ENCODE measurements at regions of chr11 and their contacts with region 1.

Region 1: DNA sequence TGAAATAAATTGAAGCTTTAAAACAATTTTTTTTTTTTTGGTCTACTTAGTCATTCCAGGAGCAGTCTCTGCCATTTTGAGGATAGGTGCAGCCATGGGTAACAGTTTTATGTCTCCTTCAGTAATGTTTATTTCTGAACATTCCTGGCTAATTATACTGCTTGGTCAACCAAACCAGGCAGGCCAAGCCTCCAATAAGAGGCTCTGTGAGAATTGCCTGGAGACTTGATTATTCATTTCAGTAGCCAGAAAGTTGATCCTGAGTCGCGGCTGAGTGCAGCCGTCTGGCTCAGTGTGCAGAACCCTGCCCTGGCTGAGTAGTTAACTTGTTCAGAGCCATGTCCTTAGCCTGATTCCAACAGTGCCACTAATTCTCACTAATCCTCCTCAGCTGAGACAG is 364.0 kb upstream of the FAT3 start:
- DNase-seq: no peak
- H3K4me3 ChIP-seq: no peak overlapping the region
- H3K27ac ChIP-seq: no peak overlapping the region
- H3K4me1 ChIP-seq: no peaks in the 10 kb centered on the region
- H3K27me3 ChIP-seq: no peaks in the 10 kb centered on the region
- CTCF ChIP-seq: no peak

Region 2: GRCh38 chr11:90661233-90661632 is 1199.4 kb before region 1 on chr11:
- CTCF ChIA-PET with region 1: no interaction called
- POLR2A ChIA-PET with region 1: interaction called, 13 read pairs
- intact Hi-C with region 1: no loop called
- DNase-seq: no peak
- H3K4me3 ChIP-seq: no peak overlapping the region
- H3K27ac ChIP-seq: no peak overlapping the region
- H3K4me1 ChIP-seq: no peaks in the 10 kb centered on the region
- H3K27me3 ChIP-seq: no peaks in the 10 kb centered on the region
- CTCF ChIP-seq: no peak